ENCODE measurements at regions of chr2 and their contacts with region 1.

Region 1: DNA sequence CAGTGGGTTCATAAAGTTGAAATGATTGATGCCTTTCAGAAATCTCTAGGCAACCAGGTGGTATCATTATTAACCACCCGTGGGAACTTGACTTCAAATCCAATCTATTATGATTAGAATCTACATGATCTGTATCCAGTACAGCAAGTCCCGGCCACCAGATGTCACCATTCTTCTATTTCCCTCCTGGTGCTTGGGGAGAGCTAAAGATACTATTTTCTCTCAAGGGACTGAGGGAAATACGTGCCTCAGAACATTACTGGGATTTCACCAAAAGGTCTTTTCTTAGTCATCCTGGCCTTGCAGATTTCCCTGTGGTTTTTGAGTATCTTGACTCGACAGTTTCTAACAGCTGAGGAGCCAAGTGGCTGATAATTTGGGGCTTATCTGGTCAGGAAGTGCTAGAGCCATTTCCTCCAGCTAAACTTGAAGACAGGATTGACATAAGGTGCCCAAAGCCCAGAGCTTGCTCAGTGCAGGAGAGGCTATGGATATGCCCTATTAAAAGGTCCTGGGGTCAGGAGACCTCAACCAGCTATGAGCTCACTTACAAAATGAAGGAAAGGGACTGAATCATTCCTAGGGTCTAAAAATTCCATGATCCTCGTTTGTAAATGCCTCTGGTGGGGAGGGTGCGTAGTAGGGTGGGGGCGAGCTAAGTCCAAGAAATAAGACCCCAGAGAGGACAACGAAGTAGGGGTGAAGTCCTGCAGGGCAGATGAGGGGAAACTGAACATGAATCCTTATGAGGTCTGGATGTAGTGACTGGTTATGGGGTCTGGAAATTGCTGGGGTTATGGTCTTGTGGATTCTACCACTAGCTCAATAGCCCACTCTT is 135.4 kb upstream of the MGAT5 start:
- DNase-seq: peak; percentile 87 to 92 (median 87)
- ATAC-seq: peak; percentile 67 to 69
- H3K4me3 ChIP-seq: no peak overlapping the region
- H3K27ac ChIP-seq: peak overlapping the region; percentile 7
- H3K4me1 ChIP-seq: peaks cover 10% of the 10 kb centered on the region
- H3K27me3 ChIP-seq: no peaks in the 10 kb centered on the region

Region 2: DNA sequence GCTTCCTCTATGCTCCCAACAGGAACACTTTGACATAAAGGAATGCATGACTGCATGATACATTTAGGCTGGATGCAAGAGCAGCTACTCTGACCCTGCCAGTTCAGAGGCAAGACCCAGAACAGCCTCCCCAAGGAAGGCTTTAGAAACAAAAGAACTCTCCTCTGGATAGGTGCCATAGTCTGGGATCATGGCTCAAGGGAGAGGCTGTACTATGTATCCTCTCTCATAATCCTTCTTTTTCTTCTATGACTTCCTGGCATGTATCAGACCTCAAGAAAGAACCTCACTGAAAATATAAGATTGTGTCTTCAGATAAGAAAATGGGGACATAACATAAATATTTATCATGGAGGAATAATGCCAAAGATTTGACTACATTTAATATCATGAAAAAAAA is 1254.5 kb before region 1 on chr2:
- intact Hi-C with region 1: no loop called
- DNase-seq: no peak
- ATAC-seq: no peak
- H3K4me3 ChIP-seq: no peak overlapping the region
- H3K27ac ChIP-seq: no peak overlapping the region
- H3K4me1 ChIP-seq: no peaks in the 10 kb centered on the region
- H3K27me3 ChIP-seq: no peaks in the 10 kb centered on the region

Region 3: GRCh38 chr2:134155134-134155533 is 36.6 kb after region 1 on chr2:
- intact Hi-C with region 1: loop called in 1 of 4 experiments (anchors 5 kb)
- DNase-seq: no peak
- ATAC-seq: no peak
- H3K4me3 ChIP-seq: no peak overlapping the region
- H3K27ac ChIP-seq: peak overlapping the region; percentile 20
- H3K4me1 ChIP-seq: peaks cover 25% of the 10 kb centered on the region
- H3K27me3 ChIP-seq: no peaks in the 10 kb centered on the region

Region 4: GRCh38 chr2:134173338-134174016 is 55.0 kb after region 1 on chr2:
- intact Hi-C with region 1: no loop called
- DNase-seq: peak; percentile 49 to 77 (median 75)
- ATAC-seq: peak; percentile 77 to 78
- H3K4me3 ChIP-seq: no peak overlapping the region
- H3K27ac ChIP-seq: peak overlapping the region; percentile 87
- H3K4me1 ChIP-seq: peaks cover 17% of the 10 kb centered on the region
- H3K27me3 ChIP-seq: no peaks in the 10 kb centered on the region

Region 5: DNA sequence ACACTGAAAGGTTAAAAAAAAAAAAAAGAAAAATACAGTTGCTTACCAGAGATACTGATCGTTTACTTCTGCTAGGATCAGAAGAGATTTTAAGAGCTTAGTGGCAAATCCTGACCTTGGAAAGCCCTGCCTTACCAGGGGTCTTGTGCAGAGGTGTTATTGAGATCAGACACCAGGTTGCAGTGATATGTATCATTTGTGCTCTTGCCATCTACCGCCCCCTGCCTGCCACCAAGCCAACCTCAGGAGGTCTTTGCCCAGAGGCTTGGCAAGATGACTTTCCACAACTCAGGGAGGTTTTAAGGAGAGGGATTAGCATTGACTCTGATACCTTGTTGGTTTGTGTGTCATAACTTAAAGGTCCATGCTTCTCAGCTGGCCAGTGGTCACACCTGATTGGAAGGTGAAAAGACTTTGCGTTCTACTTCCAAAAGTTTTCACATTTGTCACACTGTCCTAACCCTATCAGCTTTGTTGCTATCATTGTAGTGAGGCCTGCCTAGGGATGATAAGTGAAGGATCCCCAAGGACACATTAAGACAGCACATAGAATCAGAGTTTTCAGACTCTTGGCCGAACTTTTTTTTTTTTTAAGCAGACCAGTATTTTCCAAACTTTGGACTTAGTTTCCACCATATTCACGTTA is 89.2 kb after region 1 on chr2:
- intact Hi-C with region 1: loop called in 2 of 4 experiments (anchors 5 to 10 kb)
- DNase-seq: peak; percentile 53 to 76 (median 74)
- ATAC-seq: peak; percentile 56 to 85
- H3K4me3 ChIP-seq: no peak overlapping the region
- H3K27ac ChIP-seq: no peak overlapping the region
- H3K4me1 ChIP-seq: peaks cover 14% of the 10 kb centered on the region
- H3K27me3 ChIP-seq: no peaks in the 10 kb centered on the region

Region 6: GRCh38 chr2:134245340-134245984 is 127.0 kb after region 1 on chr2:
- intact Hi-C with region 1: loop called (anchors 5 to 10 kb)
- DNase-seq: peak; percentile 73 to 92 (median 82)
- ATAC-seq: peak; percentile 37 to 70
- H3K4me3 ChIP-seq: no peak overlapping the region
- H3K27ac ChIP-seq: no peak overlapping the region
- H3K4me1 ChIP-seq: peaks cover 8% of the 10 kb centered on the region
- H3K27me3 ChIP-seq: no peaks in the 10 kb centered on the region

Region 7: GRCh38 chr2:134333646-134334189 is 215.2 kb after region 1 on chr2:
- intact Hi-C with region 1: no loop called
- DNase-seq: no peak
- ATAC-seq: no peak
- H3K4me3 ChIP-seq: no peak overlapping the region
- H3K27ac ChIP-seq: no peak overlapping the region
- H3K4me1 ChIP-seq: peaks cover 2% of the 10 kb centered on the region
- H3K27me3 ChIP-seq: no peaks in the 10 kb centered on the region

Region 8: DNA sequence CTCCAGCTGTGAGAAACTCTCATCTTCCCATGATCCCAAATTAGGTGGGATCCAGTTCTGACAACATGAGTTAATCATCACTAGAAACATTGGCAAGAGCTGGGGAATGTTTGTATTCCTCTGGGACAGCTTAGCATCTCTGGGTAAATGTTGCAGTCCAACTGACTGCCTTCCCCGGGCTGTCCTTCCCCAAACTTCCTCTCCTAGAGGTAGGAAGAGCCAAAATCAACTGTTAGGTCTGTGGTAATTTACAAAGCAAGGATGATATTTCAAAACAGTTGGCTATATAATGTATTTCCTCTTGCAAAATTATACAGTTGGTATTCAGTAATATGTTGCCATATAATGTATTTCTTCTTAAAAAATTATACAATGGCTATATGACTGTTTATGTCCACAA is 283.9 kb after region 1 on chr2:
- intact Hi-C with region 1: loop called in 1 of 4 experiments (anchors 5 kb)
- DNase-seq: peak; percentile 55 to 71 (median 68)
- ATAC-seq: peak; percentile 86 to 89
- H3K4me3 ChIP-seq: no peak overlapping the region
- H3K27ac ChIP-seq: no peak overlapping the region
- H3K4me1 ChIP-seq: peaks cover 12% of the 10 kb centered on the region
- H3K27me3 ChIP-seq: no peaks in the 10 kb centered on the region

Measured in right cardiac atrium (tissue), 5 donors.